ENCODE measurements at regions of chr19 and their contacts with region 1.

Region 1: DNA sequence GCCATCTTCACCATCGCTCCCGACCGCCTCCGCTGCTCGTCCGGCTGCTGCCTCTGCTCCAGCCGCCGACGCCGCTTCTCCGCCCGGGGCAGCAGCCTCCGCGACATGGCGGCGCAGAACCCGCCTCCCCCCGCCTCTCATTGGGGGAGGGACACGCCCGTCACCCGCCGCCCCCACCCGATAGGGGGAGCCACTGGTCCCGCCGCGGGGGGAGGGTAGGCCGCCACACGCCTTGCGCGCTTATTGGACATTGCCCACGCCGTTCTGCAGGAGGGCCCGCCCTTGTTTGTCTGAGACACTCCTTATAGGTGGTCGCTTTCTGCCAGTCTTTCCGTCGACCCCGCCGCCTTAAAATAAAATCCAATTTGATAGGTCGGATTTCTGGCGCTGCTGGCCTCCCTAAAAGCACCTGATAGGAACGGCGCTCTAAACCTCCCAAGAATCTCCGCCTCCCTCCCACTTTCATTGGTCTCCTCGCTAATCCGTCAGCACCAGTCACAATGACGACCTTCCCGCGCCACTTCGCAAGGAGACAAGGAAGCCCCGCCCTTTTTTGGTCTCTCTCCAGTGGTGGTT is at the start of gene HNRNPL:
- DNase-seq: peak in 41 of 42 donors; percentile 98 to 100 (median 100)

Region 2: DNA sequence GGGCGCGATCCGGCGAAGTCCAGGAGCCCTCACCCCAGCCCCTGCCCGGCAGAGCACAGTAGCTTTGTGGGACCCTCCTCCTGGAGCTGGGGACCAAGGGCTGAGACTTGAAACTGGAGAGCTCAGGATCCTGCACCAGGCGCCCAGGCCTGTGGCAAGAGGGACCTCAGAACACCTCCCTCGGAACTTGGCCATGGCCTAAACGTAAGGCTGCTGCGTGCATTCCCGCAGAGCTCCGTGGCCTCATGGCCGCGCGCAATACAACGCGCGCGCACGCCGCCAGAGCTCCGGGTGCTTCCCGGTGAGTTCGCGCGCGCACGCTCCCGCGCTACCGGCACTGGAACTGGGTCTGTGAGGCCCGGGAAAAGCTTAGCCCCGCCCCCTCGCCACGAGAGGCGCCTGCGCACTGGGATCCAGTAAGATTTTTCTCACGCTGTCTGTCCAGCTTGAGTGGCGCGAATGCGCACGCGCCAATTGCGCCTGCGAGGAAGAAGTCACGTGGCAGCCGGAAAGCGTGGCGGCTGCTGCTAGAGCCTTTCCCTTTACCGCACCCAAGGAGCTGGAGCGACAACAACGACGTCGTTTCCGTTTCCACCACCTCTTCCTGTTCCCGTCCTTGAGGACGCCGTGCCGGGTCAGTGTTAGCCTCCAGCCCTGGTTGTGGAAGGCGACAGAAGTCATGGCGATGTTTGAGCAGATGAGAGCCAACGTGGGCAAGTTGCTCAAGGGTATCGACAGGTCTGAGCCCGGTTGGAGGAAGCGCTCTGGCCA is 231.2 kb before region 1 on chr19 and contains the start of gene EIF3K:
- intact Hi-C with region 1: loop called (anchors 5 kb)
- DNase-seq: peak; percentile 96 to 99 (median 98)

Region 3: DNA sequence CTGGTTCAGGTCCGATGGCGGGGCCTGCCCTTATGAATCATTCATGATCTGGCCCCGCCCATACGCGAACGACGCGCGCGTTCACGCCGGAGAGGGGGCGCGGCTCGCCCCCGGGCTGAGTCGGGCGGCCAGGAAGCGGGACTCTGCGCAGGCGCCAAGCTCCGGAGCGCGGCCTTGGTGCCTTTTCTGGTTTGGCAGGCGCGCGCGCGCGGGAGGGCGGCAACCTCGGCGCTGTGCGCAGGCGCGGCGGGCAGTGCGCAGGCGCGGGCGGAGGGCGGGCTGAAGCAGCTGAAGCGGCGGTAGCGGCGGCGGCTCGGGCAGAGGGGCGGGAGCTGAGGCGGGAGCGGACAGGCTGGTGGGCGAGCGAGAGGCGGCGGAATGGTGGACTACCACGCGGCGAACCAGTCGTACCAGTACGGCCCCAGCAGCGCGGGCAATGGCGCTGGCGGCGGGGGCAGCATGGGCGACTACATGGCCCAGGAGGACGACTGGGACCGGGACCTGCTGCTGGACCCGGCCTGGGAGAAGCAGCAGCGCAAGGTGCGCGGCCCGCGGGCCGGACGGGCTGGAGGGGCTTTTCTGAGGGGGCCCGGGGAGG is 202.5 kb before region 1 on chr19 and contains the start of gene ACTN4:
- intact Hi-C with region 1: loop called (anchors 10 kb)
- DNase-seq: peak; percentile 94 to 100 (median 98)

Region 4: DNA sequence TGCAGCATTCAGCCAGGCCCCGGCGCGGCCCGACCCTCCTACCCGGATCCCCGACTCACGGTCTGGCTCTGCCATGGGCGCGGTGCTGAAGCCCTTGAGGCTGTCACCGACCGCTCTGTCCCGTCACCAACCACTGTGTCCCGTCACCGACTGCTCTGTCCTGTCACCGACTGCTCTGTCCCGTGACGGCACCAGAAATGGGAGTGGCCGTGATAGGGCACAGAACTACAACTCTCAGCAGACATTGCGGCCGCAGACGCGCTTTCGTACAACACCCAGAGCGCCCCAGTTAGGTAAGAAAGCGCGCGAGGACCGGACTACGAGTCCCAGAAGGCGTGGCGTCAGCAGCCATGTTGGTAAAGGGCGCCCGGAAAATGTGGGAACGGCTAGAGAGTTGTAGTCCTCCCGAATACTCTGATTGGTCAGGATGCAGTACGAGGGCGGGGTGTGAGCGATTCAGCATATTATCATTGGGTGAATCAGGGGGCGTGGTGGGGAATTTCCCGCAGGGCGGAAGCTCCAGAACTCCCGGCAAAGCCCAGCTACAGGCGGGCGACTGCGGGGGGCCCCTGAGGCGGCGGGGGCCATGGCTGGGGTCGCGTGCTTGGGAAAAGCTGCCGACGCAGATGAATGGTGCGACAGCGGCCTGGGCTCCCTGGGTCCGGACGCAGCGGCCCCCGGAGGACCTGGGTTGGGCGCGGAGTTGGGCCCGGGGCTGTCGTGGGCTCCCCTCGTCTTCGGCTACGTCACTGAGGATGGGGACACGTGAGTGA is 49.7 kb after region 1 on chr19 and contains the starts of genes NFKBIB and SIRT2:
- intact Hi-C with region 1: loop called (anchors 5 kb)
- DNase-seq: peak; percentile 97 to 100 (median 100)

Region 5: DNA sequence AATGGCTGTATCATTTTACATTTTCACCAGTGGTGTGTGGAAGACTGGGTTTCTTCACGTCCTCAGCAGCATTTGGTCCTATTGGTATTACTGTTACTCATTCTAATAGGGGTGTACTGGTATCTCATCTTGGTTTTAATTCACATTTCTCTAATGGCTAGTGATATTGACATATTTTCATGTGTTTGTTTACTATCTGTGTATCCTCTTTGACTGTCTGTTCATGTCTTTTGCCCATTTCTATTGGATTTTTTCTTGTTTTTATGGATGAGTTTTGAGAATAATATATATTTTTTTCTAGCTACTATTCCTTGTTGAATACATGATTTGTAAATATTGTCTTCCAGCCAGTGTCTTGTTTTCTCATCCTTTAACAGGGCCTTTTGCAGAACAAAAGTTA is 432.1 kb after region 1 on chr19:
- intact Hi-C with region 1: no loop called
- DNase-seq: no peak